Mammary epithelial cell (primary cell): ENCODE measurements at regions of chr18 and their contacts with region 1.

Region 1: DNA sequence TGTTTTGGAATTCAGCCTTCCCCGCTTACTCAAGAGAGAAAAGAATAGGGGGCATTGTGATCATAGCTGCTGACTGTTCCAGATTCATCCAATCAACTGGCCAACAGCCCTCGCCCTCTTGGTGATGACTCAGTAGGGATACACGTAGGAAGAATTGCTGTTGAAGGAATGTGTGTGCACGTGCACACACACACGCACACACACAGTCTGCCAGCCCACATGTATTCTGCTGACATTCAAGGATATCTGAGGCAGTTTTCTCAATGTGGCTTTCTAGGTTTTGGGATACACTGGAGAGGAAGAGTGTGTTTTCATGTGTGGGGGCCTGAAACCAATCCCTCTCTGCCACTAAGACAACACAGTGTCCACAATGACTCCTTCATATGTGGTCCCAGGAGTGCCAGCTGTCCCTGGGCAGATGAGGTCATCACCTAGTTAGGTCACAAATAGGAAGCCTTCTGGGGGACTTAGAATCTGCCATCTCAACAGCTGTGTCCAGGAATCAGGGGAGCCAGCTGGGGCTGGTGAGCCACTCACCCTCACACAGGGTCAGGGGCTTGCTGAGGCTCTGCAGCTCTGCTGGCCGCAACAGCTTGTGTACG is 352.6 kb downstream of the SS18 start:
- DNase-seq: peak; percentile 98
- H3K4me3 ChIP-seq: no peak overlapping the region
- H3K27ac ChIP-seq: peak overlapping the region; percentile 94
- H3K4me1 ChIP-seq: peaks cover 33% of the 10 kb centered on the region
- H3K27me3 ChIP-seq: no peaks in the 10 kb centered on the region
- CTCF ChIP-seq: no peak

Region 2: DNA sequence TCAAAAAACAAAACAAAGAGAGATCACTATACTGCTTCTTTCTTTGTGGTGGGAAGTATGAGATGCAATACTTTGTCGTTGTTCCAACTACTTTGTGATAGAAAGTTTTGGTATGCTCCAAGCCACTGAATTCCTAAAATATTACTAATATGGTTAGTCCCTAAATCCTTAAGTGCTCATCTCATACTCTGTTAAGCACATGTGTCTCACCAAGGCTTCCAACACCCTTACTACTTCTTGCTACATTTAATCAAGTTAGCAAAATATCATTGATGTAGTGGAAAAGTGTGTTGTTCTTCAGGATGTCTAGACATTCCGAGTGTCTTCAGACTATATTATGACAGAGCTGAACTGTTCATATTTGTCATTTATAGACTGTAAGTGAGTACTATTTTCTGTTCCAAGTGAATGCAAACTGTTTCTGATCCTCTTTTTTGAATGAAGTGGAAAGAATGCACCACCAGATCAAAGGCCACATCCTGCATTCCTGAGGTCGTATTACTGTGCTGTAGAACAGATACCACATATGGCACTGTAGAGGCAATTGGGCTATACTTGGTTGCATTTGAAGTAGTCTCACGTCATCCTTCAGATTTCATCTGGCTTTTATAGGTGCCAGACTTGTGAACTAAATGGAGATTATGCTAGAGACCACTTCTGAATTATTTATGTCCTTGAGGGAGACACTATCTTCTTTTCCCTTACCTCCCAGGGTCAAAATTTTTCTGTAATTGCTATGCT is 87.4 kb before region 1 on chr18:
- CTCF ChIA-PET with region 1: no interaction called
- dilution Hi-C with region 1: no loop called
- in situ Hi-C with region 1: no loop called
- intact Hi-C with region 1: loop called (anchors 10 kb)
- DNase-seq: peak; percentile 72
- H3K4me3 ChIP-seq: no peak overlapping the region
- H3K27ac ChIP-seq: peak overlapping the region; percentile 39
- H3K4me1 ChIP-seq: peaks cover 24% of the 10 kb centered on the region
- H3K27me3 ChIP-seq: no peaks in the 10 kb centered on the region
- CTCF ChIP-seq: no peak

Region 3: DNA sequence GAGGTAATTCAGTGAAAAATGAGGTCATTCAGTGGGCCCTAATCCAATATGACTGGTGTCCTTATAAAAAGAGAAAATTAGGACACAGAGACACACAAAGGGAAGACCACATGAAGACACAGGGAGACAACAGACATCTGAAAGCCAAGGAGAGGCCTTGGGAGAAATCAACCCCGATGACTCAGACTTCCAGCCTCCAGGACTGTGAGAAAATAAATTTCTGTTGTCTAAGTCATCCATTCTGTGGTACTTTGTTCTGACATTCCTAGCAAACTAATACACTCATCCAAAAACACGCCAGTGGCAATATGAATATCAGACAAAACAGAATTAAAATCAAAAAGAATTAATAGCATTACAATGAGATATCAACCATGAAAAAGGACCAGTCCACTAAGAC is 48.9 kb after region 1 on chr18:
- CTCF ChIA-PET with region 1: no interaction called
- dilution Hi-C with region 1: no loop called
- in situ Hi-C with region 1: no loop called
- intact Hi-C with region 1: loop called (anchors 5 kb)
- DNase-seq: peak; percentile 79
- H3K4me3 ChIP-seq: no peak overlapping the region
- H3K27ac ChIP-seq: no peak overlapping the region
- H3K4me1 ChIP-seq: peaks cover 16% of the 10 kb centered on the region
- H3K27me3 ChIP-seq: no peaks in the 10 kb centered on the region
- CTCF ChIP-seq: no peak

Region 4: GRCh38 chr18:25832001-25832604 is 94.3 kb after region 1 on chr18:
- CTCF ChIA-PET with region 1: no interaction called
- dilution Hi-C with region 1: no loop called
- in situ Hi-C with region 1: no loop called
- intact Hi-C with region 1: no loop called
- DNase-seq: peak; percentile 33
- H3K4me3 ChIP-seq: no peak overlapping the region
- H3K27ac ChIP-seq: no peak overlapping the region
- H3K4me1 ChIP-seq: peaks cover 17% of the 10 kb centered on the region
- H3K27me3 ChIP-seq: no peaks in the 10 kb centered on the region
- CTCF ChIP-seq: peak; percentile 83 to 87

Region 5: DNA sequence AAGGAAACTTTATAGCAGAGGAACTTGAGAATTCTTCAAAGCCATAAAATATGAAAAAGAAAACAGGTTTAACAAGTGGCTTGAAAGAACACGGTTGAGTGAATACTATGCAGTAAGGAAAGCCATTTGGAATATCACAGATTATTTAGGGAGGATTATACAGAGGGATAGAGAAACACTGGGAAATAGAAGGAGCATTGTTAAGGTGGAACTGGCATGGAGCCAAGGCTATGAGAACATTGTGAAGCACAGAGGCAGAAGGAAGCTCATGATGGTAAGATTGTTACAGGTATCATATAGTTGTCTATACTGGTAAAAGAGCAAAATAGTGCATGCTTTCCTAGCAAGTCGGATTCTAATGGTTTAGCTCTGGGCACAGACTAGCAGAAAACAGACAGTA is 265.5 kb after region 1 on chr18:
- CTCF ChIA-PET with region 1: no interaction called
- dilution Hi-C with region 1: no loop called
- in situ Hi-C with region 1: no loop called
- intact Hi-C with region 1: no loop called
- DNase-seq: peak; percentile 16
- H3K4me3 ChIP-seq: no peak overlapping the region
- H3K27ac ChIP-seq: no peak overlapping the region
- H3K4me1 ChIP-seq: no peaks in the 10 kb centered on the region
- H3K27me3 ChIP-seq: no peaks in the 10 kb centered on the region
- CTCF ChIP-seq: no peak